Aorta (tissue), 5 donors: ENCODE measurements at regions of chr14 and their contacts with region 1.

Region 1: DNA sequence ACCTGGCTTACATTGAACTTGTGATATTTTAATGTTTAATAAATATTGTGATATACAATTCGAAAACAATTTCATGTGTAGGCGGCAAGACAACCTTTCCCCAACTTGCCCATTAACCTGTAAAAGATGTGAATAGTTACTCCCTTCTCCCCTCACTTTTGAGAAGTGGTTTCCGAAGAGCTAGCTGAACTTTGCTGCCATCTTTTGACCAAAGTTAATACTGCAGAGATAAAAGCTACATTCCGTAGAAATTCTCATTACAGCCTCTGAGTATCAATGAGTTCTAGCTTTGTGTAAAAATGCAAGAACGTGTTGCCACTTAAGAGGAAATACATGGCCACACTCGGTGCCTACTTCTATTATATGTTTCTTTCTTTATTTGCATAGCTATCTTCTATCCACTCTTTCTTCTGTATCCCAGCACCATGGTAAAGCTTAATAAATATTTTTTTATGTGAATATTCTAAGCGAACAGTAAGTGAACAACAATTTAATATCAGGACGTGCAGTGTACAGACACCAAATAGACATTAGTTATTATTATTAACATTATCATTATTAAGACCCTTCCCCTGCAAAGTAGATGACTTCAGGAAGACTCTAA is 105.1 kb upstream of the TMEM260 start:
- DNase-seq: no peak
- ATAC-seq: peak; percentile 77
- H3K4me3 ChIP-seq: no peak overlapping the region
- H3K27ac ChIP-seq: no peak overlapping the region
- H3K4me1 ChIP-seq: no peaks in the 10 kb centered on the region
- H3K27me3 ChIP-seq: no peaks in the 10 kb centered on the region

Region 2: DNA sequence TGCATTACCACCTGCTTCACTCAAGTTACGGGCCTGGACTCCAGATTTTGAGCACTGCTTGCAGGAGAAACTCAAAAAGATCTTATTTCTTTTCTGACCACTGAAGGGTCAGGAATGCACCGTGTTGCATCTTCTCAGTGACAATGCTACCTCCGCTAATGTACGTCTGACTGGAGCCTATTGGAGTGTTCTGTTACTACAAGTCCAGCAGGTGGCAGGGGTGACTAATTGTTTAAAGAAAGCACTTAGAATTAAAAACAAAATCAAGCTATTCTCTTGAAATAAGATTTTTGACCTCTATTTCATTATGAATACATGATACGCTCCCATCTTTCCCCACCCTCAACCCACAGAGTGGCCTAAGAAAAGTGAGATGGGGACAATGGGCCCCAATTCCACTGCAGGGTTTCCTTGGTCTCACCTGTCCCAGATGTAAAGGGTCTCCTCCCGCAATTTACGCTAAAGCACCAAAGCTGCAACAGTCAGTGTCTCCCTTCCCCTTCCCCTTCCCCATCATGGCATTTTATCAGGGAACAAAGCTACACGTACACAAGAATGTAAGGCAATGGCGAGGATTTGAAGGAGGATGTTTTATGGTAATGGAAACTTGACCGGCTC is 1036.3 kb before region 1 on chr14:
- intact Hi-C with region 1: loop called in 1 of 2 experiments (anchors 5 kb)
- DNase-seq: no peak
- ATAC-seq: no peak
- H3K4me3 ChIP-seq: no peak overlapping the region
- H3K27ac ChIP-seq: no peak overlapping the region
- H3K4me1 ChIP-seq: no peaks in the 10 kb centered on the region
- H3K27me3 ChIP-seq: no peaks in the 10 kb centered on the region

Region 3: DNA sequence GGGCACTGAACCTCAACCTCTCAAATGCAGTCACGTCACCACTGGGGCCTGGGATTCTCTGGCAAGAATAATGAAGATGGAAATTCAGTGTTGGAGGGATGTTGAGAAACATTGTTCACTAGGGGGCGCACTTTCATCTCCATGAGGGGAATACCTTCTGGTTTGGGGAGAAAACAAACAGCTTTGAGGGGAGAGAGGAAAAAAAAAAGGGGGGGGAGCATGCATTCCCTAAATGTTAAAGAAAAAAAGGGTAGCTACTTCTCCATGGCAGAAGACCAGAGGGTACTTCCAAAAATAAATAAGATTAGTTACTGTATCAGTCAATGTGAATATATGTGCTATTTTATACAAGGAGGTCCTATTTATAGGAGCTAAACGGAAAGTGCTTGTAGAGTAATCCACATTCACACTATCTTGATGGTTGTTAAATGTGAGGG is 1028.3 kb before region 1 on chr14:
- intact Hi-C with region 1: loop called in 1 of 2 experiments (anchors 5 kb)
- DNase-seq: no peak
- ATAC-seq: peak; percentile 72
- H3K4me3 ChIP-seq: no peak overlapping the region
- H3K27ac ChIP-seq: no peak overlapping the region
- H3K4me1 ChIP-seq: peaks cover 0 to 3% of the 10 kb centered on the region in 2 donors
- H3K27me3 ChIP-seq: no peaks in the 10 kb centered on the region

Region 4: GRCh38 chr14:55707365-55707804 is 767.1 kb before region 1 on chr14:
- intact Hi-C with region 1: loop called (anchors 2 to 10 kb)
- DNase-seq: no peak
- ATAC-seq: peak; percentile 61
- H3K4me3 ChIP-seq: no peak overlapping the region
- H3K27ac ChIP-seq: no peak overlapping the region
- H3K4me1 ChIP-seq: peaks cover 0 to 3% of the 10 kb centered on the region in 2 donors
- H3K27me3 ChIP-seq: no peaks in the 10 kb centered on the region